Naive thymus-derived CD4-positive, alpha-beta T cell (primary cell): ENCODE measurements at regions of chr17 and their contacts with region 1.

Region 1: DNA sequence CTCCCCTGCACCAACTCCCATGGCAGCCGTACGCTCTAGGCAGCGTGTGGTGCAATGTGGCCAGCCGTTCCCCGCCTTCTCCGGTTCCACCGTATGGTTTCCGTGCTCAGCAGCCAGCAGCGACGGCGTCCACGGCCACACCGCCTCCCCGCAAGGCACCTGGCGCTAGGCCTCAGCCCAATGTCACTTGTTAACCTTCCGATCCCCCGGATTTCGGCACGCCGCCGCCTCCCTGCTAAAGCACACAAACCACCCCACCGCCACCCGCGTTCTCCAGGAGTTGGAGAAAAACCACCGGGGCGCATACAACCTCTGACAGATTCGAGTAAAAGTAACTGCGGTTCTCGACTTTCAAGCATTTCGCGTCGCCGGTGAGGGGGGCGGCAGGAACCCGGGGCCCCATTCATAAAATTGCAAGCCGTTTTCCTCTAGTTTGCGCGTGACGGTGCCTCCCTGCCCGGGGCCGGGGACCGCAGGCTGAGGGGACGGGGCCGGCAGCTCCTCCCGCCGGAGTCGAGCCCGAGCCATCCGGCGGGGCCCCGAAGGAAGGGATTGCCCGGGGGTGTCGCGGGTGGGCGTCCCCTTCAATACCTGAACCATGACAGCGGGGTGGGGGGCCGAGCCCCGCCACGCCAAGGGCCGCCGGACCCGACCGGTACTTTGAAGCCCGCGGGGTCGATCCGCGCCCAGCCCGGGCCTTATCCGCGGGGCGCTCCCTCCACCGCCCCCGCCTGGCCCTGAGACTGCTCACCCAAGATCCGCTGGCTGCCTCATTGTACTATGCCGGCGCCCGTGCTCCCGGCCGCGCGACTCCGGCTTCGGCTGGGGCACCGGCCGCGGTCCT is at the start of gene TEX2:
- DNase-seq: peak; percentile 44 to 82 (median 74)
- ATAC-seq: peak; percentile 56
- H3K4me3 ChIP-seq: peak within 1 kb of the TSS; percentile 99
- H3K4me3 Mint-ChIP-seq: peak within 1 kb of the TSS; percentile 87 to 98 (median 94)
- H3K27ac ChIP-seq: peak within 1 kb of the TSS; percentile 90
- H3K27ac Mint-ChIP-seq: peak within 1 kb of the TSS; percentile 87 to 98 (median 93)
- H3K4me1 ChIP-seq: peaks cover 18% of the 10 kb centered on the region in 2 donors
- H3K4me1 Mint-ChIP-seq: peaks cover 22 to 50% (median 42%) of the 10 kb centered on the region in 7 donors
- H3K27me3 ChIP-seq: no peaks in the 10 kb centered on the region
- H3K27me3 Mint-ChIP-seq: peaks cover 0 to 11% (median 5%) of the 10 kb centered on the region in 5 donors
- total RNA-seq, gene TEX2: 14.1 to 24.2 (median 14.4) TPM

Region 2: DNA sequence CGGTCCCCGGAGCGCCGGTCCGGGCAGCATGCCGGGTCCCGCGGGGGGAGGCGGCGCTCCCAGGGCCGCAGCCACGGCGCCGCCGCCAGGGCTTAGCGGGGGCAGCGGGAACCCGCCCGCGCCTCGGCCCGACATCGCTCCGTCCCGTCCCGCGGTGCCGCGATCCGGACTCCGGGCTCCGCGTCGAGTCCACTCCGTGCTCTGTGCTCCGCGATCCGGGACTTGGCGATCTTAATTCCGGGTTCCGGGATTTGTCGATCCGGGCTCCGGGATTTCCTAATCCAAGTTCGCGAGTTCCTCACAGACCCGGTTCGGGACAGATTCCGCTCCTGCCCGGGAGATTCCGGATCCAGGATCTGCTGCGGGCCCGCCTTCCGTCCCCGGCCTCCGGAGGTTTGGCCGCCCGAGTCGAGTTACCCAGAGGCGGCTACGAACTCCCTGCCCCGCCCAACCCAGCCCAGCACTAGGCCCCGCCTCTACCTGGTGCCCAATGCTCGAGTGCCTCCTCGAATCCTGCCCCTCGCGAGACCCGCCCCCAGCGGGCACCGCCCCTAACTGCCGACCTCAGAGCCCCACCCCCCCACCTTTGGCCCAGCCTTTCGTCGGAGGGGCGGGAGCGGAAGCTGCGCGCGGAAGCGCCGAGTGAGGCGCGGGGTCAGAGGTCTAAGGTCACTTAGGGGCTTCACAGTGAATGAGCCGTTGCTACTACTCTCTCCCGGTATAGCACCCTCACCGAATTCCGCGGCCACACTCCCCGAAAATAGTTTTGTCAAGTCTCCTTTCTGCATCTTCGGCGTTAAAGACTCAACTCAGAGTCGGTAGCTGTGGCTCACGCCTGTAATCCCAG is 419.9 kb before region 1 on chr17 and contains the start of gene SMARCD2:
- CTCF ChIA-PET with region 1: no interaction called
- POLR2A ChIA-PET with region 1: no interaction called
- intact Hi-C with region 1: loop called in 1 of 2 experiments (anchors 2 kb)
- DNase-seq: peak; percentile 94 to 99 (median 98)
- ATAC-seq: peak; percentile 96
- H3K4me3 ChIP-seq: peak within 1 kb of the TSS; percentile 87
- H3K4me3 Mint-ChIP-seq: peak within 1 kb of the TSS; percentile 92 to 98 (median 95)
- H3K27ac ChIP-seq: peak within 1 kb of the TSS; percentile 96
- H3K27ac Mint-ChIP-seq: peak within 1 kb of the TSS; percentile 87 to 95 (median 92)
- H3K4me1 ChIP-seq: peaks cover 34 to 36% of the 10 kb centered on the region in 2 donors
- H3K4me1 Mint-ChIP-seq: peaks cover 27 to 52% (median 44%) of the 10 kb centered on the region in 7 donors
- H3K27me3 ChIP-seq: no peaks in the 10 kb centered on the region
- H3K27me3 Mint-ChIP-seq: no peaks in the 10 kb centered on the region
- total RNA-seq, gene SMARCD2: 102 to 148 (median 109) TPM

Region 3: GRCh38 chr17:64281962-64282727 is 19.5 kb after region 1 on chr17:
- CTCF ChIA-PET with region 1: interaction called, 4 read pairs
- POLR2A ChIA-PET with region 1: interaction called, 5 read pairs
- intact Hi-C with region 1: loop called (anchors 1 to 2 kb)
- DNase-seq: peak in 8 of 9 donors; percentile 31 to 61 (median 54)
- ATAC-seq: peak; percentile 83
- H3K4me3 ChIP-seq: no peak overlapping the region
- H3K4me3 Mint-ChIP-seq: no peak overlapping the region
- H3K27ac ChIP-seq: no peak overlapping the region
- H3K27ac Mint-ChIP-seq: peak overlapping the region in 1 of 9 donors; percentile 20
- H3K4me1 ChIP-seq: peaks cover 0 to 5% of the 10 kb centered on the region in 2 donors
- H3K4me1 Mint-ChIP-seq: peaks cover 0 to 7% (median 0%) of the 10 kb centered on the region in 7 donors
- H3K27me3 ChIP-seq: no peaks in the 10 kb centered on the region
- H3K27me3 Mint-ChIP-seq: peaks cover 0 to 8% (median 0%) of the 10 kb centered on the region in 5 donors

Region 4: GRCh38 chr17:64496786-64497564 is 234.3 kb after region 1 on chr17 and contains the start of gene POLG2:
- CTCF ChIA-PET with region 1: no interaction called
- POLR2A ChIA-PET with region 1: interaction called, 3 read pairs
- intact Hi-C with region 1: loop called (anchors 1 to 2 kb)
- DNase-seq: peak; percentile 93 to 96 (median 95)
- ATAC-seq: peak; percentile 89
- H3K4me3 ChIP-seq: peak within 1 kb of the TSS; percentile 69
- H3K4me3 Mint-ChIP-seq: peak within 1 kb of the TSS; percentile 96 to 100 (median 99)
- H3K27ac ChIP-seq: peak within 1 kb of the TSS; percentile 83
- H3K27ac Mint-ChIP-seq: peak within 1 kb of the TSS; percentile 91 to 100 (median 97)
- H3K4me1 ChIP-seq: peaks cover 23 to 31% of the 10 kb centered on the region in 2 donors
- H3K4me1 Mint-ChIP-seq: peaks cover 44 to 88% (median 76%) of the 10 kb centered on the region in 7 donors
- H3K27me3 ChIP-seq: no peaks in the 10 kb centered on the region
- H3K27me3 Mint-ChIP-seq: no peaks in the 10 kb centered on the region
- total RNA-seq, gene POLG2: 34.5 to 69.6 (median 41.9) TPM